Psoas muscle (tissue), 8 donors: ENCODE measurements at regions of chr10 and their contacts with region 1.

Region 1: DNA sequence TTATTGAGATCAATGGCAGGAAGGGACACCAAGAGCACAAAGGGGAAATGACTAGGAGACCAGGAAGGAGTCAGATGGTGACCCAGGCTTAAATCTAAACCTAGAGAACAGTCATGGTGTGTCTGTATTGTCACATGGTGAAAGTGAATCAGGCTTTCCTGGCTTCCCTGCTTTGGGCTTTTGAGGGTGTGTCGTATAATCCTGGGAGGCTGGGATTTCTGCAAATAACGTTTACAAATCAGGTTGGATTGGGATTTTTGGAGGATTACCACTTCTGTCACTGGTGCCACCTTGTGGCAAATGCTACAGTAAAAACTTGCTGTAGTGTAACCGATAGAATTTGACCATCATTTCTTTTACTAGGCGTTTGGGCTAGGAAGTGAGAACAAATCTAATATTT is 502.6 kb downstream of the NRG3 start:
- DNase-seq: no peak
- ATAC-seq: no peak
- H3K4me3 ChIP-seq: no peak overlapping the region
- H3K27ac ChIP-seq: no peak overlapping the region
- H3K4me1 ChIP-seq: no peaks in the 10 kb centered on the region
- H3K27me3 ChIP-seq: no peaks in the 10 kb centered on the region
- CTCF ChIP-seq: no peak

Region 2: DNA sequence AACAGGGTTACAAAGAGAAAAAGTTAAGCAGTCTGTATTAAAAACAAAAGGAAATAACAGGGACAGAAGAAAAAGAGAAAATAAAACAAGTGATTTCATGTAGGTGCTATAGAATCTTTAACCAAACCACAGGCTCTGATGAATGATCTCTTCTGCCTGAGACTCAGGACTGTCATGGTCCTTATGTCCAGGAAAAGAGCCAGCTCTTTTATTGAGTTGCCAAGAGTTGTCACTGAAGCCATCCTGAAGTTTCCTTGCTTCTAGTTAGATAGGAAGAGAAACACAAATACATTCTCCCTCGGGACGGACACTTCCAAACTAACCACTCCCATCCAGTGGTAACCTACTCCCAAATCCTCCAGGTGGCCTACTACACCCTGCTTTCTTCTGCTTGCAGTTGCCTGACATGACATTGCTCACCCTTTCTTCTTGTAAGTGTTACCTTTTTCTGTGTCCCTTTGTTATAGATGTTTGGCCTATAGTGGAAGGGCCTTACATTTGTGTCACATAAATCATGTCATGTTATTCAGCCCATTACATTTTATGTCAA is 155.9 kb before region 1 on chr10:
- intact Hi-C with region 1: loop called in 1 of 2 experiments (anchors 5 kb)
- DNase-seq: no peak
- ATAC-seq: no peak
- H3K4me3 ChIP-seq: no peak overlapping the region
- H3K27ac ChIP-seq: no peak overlapping the region
- H3K4me1 ChIP-seq: no peaks in the 10 kb centered on the region
- H3K27me3 ChIP-seq: peaks cover 0 to 3% (median 0%) of the 10 kb centered on the region in 3 donors
- CTCF ChIP-seq: no peak